WTC11 (cell line): ENCODE measurements at regions of chr7 and their contacts with region 1.

Region 1: GRCh38 chr7:135380351-135380750 is 129.6 kb downstream of the CNOT4 start:
- DNase-seq: no peak
- ATAC-seq: peak; percentile 60
- H3K4me3 Mint-ChIP-seq: no peak overlapping the region
- H3K27ac Mint-ChIP-seq: no peak overlapping the region
- H3K4me1 Mint-ChIP-seq: peaks cover 20% of the 10 kb centered on the region
- H3K27me3 Mint-ChIP-seq: no peaks in the 10 kb centered on the region
- CTCF ChIP-seq: no peak

Region 2: DNA sequence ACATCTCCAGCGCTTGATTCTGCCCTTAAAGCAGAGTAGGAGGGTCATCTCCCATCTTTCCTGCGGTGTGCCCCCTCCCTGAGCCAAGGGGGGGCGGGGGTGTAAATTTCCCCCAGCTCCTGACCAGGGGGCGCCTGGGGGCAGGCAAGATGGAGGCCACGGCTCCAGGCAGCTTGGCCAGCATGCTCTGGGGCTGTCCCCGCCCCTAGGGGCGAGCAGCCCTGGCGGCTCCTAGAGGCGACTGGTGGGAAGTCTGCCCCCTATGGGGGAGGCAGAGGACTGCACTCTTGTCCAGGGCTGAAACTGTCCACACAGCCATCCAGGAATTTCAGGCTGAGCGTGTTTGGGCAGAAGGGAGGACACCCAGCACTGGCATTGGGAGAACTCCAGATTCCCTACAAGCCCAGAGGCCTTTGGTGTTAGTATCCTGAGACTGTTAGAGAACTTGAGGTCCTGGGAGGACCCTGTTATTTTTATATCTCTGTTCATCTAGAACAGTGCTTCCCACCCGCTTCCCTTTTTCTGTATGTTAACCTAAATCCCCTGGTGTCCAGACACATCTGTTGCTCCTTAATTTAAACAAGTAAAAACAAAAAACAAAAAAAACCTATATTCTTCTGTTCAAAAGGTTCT is 142.1 kb before region 1 on chr7:
- CTCF ChIA-PET with region 1: no interaction called
- POLR2A ChIA-PET with region 1: no interaction called
- DNase-seq: peak; percentile 72
- ATAC-seq: peak; percentile 90
- H3K4me3 Mint-ChIP-seq: no peak overlapping the region
- H3K27ac Mint-ChIP-seq: no peak overlapping the region
- H3K4me1 Mint-ChIP-seq: peaks cover 23% of the 10 kb centered on the region
- H3K27me3 Mint-ChIP-seq: no peaks in the 10 kb centered on the region
- CTCF ChIP-seq: peak; percentile 85

Region 3: GRCh38 chr7:135362871-135363270 is 17.5 kb before region 1 on chr7:
- CTCF ChIA-PET with region 1: interaction called, 18 read pairs
- POLR2A ChIA-PET with region 1: no interaction called
- DNase-seq: peak; percentile 52
- ATAC-seq: peak; percentile 92
- H3K4me3 Mint-ChIP-seq: no peak overlapping the region
- H3K27ac Mint-ChIP-seq: no peak overlapping the region
- H3K4me1 Mint-ChIP-seq: peaks cover 10% of the 10 kb centered on the region
- H3K27me3 Mint-ChIP-seq: no peaks in the 10 kb centered on the region
- CTCF ChIP-seq: peak; percentile 40; the same call in 1 of the 2 replicates

Region 4: GRCh38 chr7:135406918-135407317 is 26.6 kb after region 1 on chr7:
- CTCF ChIA-PET with region 1: no interaction called
- POLR2A ChIA-PET with region 1: no interaction called
- DNase-seq: no peak
- ATAC-seq: no peak
- H3K4me3 Mint-ChIP-seq: no peak overlapping the region
- H3K27ac Mint-ChIP-seq: no peak overlapping the region
- H3K4me1 Mint-ChIP-seq: no peaks in the 10 kb centered on the region
- H3K27me3 Mint-ChIP-seq: no peaks in the 10 kb centered on the region
- CTCF ChIP-seq: no peak